ENCODE measurements at regions of chr12 and their contacts with region 1.

Region 1: GRCh38 chr12:96208801-96209549 is 14.8 kb downstream of the ELK3 start:
- DNase-seq: no peak

Region 2: DNA sequence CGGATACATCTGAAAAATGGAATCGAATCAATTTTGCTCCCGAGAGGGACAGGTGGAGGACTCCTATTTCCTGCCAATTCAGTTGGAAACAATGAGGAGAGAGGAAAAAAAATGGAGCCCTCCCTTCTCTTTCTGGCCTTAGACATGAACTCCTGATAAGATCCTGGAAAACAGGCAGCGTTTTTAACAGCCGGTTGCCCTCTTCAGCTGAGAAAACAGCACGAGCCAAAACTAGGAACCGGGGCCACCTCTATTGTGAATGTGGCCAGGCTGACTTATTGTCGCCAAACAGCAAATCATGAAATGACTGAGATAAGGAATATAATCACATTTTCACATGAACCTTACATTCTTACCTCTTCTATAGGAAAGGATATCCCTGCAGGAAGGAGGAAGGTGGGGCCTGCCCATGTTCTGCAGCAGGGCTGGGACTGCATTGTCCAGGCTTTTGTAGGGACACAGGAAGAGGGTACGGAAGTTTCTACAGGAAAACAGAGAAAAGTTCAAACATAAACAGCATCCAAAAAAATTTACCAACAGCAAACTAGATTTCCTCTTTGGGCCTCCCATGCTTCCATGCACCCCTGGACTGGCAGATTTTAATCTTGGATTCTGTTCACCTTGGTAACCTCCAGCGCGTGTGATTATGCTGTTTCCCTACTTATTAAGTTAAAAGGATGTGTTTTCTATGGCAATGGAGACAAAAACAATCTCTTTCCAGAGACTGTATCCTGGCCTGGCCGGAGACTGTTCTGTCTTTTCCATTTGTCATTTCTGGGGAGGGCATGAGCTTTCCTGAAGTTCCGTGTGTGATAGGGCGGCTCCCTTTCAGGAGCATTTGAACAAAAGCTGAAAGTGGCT is 43.8 kb before region 1 on chr12:
- intact Hi-C with region 1: loop called (anchors 5 kb)
- DNase-seq: peak; percentile 75

Region 3: DNA sequence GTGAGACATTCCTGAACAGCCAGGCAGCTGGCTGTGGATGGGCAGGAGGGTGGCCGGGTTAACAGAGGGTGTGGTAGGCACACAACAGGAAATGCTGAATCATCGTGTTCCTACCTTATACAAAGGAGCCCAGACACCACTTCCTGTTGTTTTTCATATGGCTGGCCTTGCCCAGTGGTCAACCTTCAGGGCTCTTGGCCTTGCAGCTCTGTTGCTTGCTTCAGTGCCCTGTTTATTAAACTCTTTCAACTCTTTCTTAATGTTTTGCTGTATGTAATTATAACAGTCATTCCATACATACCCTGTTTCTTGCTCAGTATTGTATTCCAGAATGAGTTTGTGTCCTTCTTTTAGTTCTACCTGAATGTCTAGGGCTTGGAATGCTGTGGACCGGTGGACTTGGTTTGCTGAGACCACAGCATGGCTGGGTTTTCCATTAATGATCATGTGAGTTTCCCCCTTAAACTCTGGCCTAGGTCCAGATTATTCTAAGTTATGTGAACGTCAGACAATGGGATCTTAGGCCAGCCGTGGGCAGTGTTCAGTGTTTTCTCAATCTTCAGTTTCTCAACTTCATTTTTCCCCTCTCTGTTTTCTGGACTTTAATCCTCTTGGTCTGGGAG is 292.3 kb after region 1 on chr12:
- intact Hi-C with region 1: no loop called
- DNase-seq: peak; percentile 86